ENCODE measurements at regions of chr11 and their contacts with region 1.

Region 1: DNA sequence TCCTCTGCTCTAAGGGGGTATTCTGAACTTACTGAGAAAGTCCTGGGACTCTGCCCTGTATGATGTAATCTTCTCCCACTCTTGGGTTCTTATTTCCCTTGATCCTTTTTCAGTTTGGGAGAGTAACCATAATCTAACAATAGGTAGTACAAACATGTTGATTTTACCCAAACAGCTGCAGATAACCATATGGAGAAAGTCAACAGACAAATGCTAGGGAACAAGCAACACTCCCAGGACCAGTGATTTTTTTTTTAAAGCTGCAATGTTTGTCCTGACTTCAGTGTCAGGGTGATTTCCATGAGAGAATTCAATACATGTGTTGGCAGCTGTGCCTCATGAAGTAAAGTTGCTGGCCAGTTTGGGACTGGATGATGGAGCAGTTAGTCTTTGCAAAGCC is 156.5 kb downstream of the FCHSD2 start:
- DNase-seq: no peak
- H3K4me3 ChIP-seq: no peak overlapping the region
- H3K27ac ChIP-seq: no peak overlapping the region
- H3K4me1 ChIP-seq: no peaks in the 10 kb centered on the region
- H3K27me3 ChIP-seq: no peaks in the 10 kb centered on the region
- CTCF ChIP-seq: no peak

Region 2: DNA sequence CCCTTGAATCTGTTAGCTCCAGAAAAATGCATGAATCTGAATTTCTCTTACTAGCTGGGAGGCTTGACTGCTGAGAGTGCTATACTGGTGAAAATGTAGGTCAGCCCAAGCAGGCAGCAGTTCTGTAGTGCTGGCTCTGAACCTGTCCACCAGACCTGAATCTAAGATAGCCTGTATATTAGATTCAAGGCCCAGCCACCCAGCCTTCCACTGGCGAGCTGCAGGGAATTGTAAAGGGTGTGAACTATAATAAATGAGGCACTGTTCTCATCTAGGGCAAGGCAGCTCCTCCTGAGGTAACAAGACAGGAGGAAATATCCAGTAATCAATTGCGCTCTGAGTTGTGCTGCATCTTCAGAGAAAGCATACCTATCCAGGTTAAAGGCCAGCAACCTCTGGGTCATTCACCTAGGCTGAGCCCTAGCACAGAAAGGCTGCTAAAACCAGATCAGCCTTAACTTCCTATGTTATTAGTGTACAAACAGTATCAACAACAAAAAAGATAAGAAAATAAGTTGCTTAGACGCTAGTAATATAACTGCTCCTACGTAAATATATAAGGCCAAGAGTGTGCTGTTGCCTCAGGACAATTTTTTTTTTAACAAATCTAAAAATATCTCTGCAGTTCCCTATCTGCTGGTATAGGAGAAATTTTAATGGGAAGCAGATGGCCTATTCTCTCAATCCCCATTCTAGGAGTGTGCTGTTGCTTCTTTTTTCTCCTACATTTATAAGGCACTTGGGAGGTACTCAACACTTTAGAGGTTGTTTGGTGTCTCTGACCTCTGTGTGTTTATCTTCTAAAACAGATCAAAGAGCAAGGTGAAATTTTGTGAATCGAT is 453.6 kb after region 1 on chr11:
- CTCF ChIA-PET with region 1: interaction called, 13 read pairs
- dilution Hi-C with region 1: no loop called
- in situ Hi-C with region 1: no loop called
- intact Hi-C with region 1: no loop called
- DNase-seq: no peak
- H3K4me3 ChIP-seq: no peak overlapping the region
- H3K27ac ChIP-seq: no peak overlapping the region
- H3K4me1 ChIP-seq: no peaks in the 10 kb centered on the region
- H3K27me3 ChIP-seq: no peaks in the 10 kb centered on the region
- CTCF ChIP-seq: no peak